GM12878 (cell line): ENCODE measurements at regions of chr7 and their contacts with region 1.

Region 1: GRCh38 chr7:23298885-23299769 is at the start of gene MALSU1:
- DNase-seq: peak; percentile 89
- ATAC-seq: peak; percentile 98
- H3K4me3 ChIP-seq: peak within 1 kb of the TSS; percentile 87
- H3K27ac ChIP-seq: peak within 1 kb of the TSS; percentile 60
- H3K4me1 ChIP-seq: peaks cover 2% of the 10 kb centered on the region; the same call in 1 of the 2 replicates
- H3K27me3 ChIP-seq: no peaks in the 10 kb centered on the region
- CTCF ChIP-seq: no peak
- EP300 ChIP-seq: no peak
- POLR2A ChIP-seq: peak; percentile 97
- RAD21 ChIP-seq: no peak
- polyA plus RNA-seq, gene MALSU1: 8.5 to 35.0 TPM

Region 2: GRCh38 chr7:23261843-23262452 is 37.2 kb before region 1 on chr7:
- CTCF ChIA-PET with region 1: interaction called, 10 read pairs
- POLR2A ChIA-PET with region 1: interaction called, 5 read pairs
- RAD21 ChIA-PET with region 1: interaction called, 6 read pairs
- SMC1A ChIA-PET with region 1: no interaction called
- in situ Hi-C with region 1: no loop called
- intact Hi-C with region 1: no loop called
- DNase-seq: no peak
- ATAC-seq: peak; percentile 95
- H3K4me3 ChIP-seq: no peak overlapping the region
- H3K27ac ChIP-seq: no peak overlapping the region
- H3K4me1 ChIP-seq: peaks cover 11% of the 10 kb centered on the region
- H3K27me3 ChIP-seq: no peaks in the 10 kb centered on the region; a peak in 1 of 4 replicates
- CTCF ChIP-seq: peak; percentile 83 to 94 (median 86)
- EP300 ChIP-seq: no peak
- POLR2A ChIP-seq: no peak
- RAD21 ChIP-seq: peak; percentile 87

Region 3: GRCh38 chr7:23347682-23348180 is 48.6 kb after region 1 on chr7:
- CTCF ChIA-PET with region 1: interaction called, 3 read pairs
- POLR2A ChIA-PET with region 1: interaction called, 3 read pairs
- RAD21 ChIA-PET with region 1: no interaction called
- SMC1A ChIA-PET with region 1: interaction called, 10 read pairs
- in situ Hi-C with region 1: no loop called
- intact Hi-C with region 1: no loop called
- DNase-seq: no peak
- ATAC-seq: 0 out of 3 replicates have a peak, but pooled peaks have one; percentile 21
- H3K4me3 ChIP-seq: no peak overlapping the region
- H3K27ac ChIP-seq: no peak overlapping the region
- H3K4me1 ChIP-seq: peaks cover 19% of the 10 kb centered on the region
- H3K27me3 ChIP-seq: no peaks in the 10 kb centered on the region
- CTCF ChIP-seq: no peak
- EP300 ChIP-seq: no peak
- POLR2A ChIP-seq: no peak
- RAD21 ChIP-seq: no peak

Region 4: GRCh38 chr7:23373151-23374004 is 74.3 kb after region 1 on chr7:
- CTCF ChIA-PET with region 1: no interaction called
- POLR2A ChIA-PET with region 1: no interaction called
- RAD21 ChIA-PET with region 1: no interaction called
- SMC1A ChIA-PET with region 1: no interaction called
- in situ Hi-C with region 1: no loop called
- intact Hi-C with region 1: loop called (anchors 2 kb)
- DNase-seq: peak; percentile 76
- ATAC-seq: peak; percentile 74
- H3K4me3 ChIP-seq: peak overlapping the region; percentile 41; the same call in 1 of the 2 replicates
- H3K27ac ChIP-seq: peak overlapping the region; percentile 52
- H3K4me1 ChIP-seq: peaks cover 40% of the 10 kb centered on the region
- H3K27me3 ChIP-seq: no peaks in the 10 kb centered on the region
- CTCF ChIP-seq: no peak
- EP300 ChIP-seq: peak; percentile 51 to 95; a peak in 3 of 4 replicates
- POLR2A ChIP-seq: no peak
- RAD21 ChIP-seq: no peak